ENCODE measurements at regions of chrX and their contacts with region 1.

Region 1: DNA sequence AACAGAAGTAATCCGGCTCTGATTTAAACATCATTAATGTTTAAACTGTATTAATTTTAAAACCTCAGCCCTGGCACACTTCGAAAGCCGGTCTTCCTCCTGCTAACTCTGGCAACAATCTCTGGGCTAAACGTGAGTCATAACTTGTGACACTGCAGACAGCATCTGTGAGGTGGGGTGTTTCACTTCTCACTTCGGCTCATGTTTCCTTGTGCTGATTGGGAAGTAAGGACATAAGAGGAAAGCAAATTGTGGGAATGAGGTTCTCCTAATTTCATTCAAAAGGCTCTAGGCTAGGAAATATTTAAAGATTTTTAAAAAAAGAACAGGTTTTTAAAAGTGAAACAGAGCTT is 139.9 kb upstream of the USP9X start:
- DNase-seq: no peak

Region 2: DNA sequence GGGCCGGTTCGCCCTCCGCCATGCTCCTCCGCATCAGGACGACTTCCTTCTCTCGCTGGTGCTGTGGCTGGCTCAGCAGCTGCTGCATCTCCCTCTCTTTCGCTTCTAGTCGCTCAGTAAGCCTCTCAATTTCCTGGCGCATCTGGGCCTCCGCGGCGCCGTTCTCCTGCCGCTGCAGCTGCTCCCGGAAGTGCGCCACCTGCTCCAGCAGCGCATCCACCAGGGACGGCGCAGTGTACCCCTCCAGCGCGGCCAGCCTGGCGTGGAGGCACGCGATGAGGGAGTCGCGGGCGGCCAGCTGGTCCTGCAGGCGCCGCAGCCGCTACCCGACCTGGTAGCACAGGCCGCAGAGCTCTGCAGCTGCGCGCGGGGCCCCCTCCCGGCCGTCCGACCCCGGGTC is 112.6 kb before region 1 on chrX:
- intact Hi-C with region 1: no loop called
- DNase-seq: no peak

Region 3: GRCh38 chrX:41116948-41117347 is 171.6 kb after region 1 on chrX:
- intact Hi-C with region 1: loop called (anchors 10 kb)
- DNase-seq: no peak

Measured in cardiac septum (tissue), 1 donor.